Heart left ventricle (tissue), 16 donors: ENCODE measurements at regions of chr21 and their contacts with region 1.

Region 1: DNA sequence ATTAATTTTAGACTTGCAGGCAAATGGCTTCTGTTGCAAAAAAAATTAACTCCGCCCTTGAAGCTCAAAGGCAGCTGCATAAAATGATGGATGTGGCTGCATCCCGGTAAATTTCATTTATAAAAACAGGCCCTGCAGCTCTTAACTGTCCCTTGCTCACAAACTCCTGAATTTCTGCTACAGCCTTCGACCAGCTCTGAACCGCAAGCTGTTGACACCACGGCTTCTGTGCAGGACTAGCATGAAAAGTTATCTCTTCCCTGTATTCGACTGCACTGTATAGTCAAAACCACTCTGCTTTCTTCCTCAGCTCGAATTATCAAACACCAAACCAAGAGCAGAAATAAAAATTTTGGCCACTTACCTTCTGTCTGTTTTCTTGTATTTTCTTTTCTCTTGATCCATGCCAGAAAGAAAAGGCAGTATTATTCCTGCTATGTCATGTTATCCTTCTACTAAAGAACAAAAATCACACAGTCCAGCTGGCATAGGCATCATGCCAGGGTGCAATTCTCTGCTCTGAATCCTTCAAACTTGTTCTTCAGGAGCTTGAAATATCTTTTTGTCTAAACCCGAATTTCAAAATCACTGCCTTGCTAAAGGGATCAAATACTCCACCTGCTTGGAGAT is 195.5 kb upstream of the NCAM2 start:
- DNase-seq: no peak
- ATAC-seq: no peak
- H3K4me3 ChIP-seq: no peak overlapping the region
- H3K27ac ChIP-seq: no peak overlapping the region
- H3K4me1 ChIP-seq: no peaks in the 10 kb centered on the region
- H3K27me3 ChIP-seq: no peaks in the 10 kb centered on the region
- CTCF ChIP-seq: no peak
- POLR2A ChIP-seq: no peak

Region 2: DNA sequence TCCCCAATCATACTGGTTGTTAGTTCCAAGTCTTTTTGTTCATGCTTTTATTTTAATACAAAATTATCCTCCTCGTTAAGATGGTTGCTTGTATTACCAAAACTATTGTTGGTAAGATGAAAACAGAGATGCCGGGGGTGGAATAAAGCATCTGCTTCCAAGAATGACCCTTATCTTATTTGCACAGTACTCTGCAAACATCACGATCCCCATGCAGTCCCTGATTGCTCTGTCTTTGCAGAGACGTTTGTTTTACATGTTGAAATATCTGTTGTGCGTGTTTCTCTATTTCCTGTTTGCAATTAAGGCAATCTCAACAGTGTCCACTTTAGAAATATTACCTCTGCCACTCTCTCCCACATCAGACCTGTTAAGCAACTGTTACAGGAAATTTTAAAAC is 54.2 kb after region 1 on chr21:
- intact Hi-C with region 1: loop called in 1 of 10 experiments (anchors 10 kb)
- DNase-seq: no peak
- ATAC-seq: no peak
- H3K4me3 ChIP-seq: no peak overlapping the region
- H3K27ac ChIP-seq: no peak overlapping the region
- H3K4me1 ChIP-seq: no peaks in the 10 kb centered on the region
- H3K27me3 ChIP-seq: no peaks in the 10 kb centered on the region
- CTCF ChIP-seq: no peak
- POLR2A ChIP-seq: no peak